Heart left ventricle (tissue), 16 donors: ENCODE measurements at regions of chr20 and their contacts with region 1.

Region 1: DNA sequence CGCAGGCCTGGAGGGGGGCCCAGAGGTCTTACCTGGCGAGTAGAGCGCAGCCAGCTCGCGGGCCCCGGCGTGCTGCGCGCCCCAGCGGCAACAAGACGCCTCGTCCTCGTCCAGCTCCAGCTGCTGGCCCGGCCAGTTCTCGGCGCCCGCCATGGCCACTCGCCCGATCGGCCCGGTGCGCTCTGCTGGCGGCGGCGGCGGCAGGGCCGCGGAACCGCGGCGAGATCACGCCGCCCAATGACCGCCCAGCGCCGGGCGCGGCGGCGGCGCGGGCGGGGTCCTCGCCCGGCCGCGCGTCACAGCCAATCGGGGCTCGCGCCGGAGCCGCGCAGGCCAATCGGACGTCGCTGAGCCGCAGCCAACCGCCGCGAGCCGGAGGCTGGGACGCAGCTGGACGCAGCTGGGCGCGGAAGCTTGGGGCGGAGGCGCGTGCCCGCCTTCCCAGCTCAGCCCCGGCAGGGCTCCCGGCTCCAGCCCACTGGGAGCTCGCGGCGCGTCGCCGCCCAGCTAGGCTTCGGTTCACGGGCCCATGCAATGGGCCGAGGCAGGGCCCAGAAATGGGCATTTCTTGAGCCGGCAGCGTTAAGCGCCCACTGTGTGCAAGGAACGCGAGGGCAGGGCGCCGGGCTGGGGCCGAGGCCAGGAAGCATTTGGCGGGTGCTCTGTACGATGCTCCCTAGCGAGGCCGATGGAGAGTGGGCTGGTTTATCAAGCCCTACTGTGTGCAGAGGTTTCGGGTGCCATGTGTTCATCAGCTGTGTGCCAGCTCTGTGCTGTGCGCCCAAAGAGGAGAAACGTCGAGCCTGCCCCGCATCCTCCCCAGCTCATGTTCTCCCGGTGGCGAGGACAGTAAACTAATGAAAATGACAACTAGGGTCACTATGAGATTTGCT is at the start of gene PEDS1:
- DNase-seq: peak; percentile 94 to 97 (median 95)
- ATAC-seq: peak; percentile 95 to 98 (median 97)
- H3K4me3 ChIP-seq: peak within 1 kb of the TSS; percentile 37 to 100 (median 97)
- H3K27ac ChIP-seq: peak within 1 kb of the TSS; percentile 54 to 98 (median 94)
- H3K4me1 ChIP-seq: peaks cover 7 to 50% (median 39%) of the 10 kb centered on the region in 12 donors
- H3K27me3 ChIP-seq: no peaks in the 10 kb centered on the region
- CTCF ChIP-seq: peak in 1 of 12 donors; percentile 15
- POLR2A ChIP-seq: peak; percentile 74 to 87
- total RNA-seq, gene PEDS1: 13.7 to 37.4 (median 23.6) TPM

Region 2: DNA sequence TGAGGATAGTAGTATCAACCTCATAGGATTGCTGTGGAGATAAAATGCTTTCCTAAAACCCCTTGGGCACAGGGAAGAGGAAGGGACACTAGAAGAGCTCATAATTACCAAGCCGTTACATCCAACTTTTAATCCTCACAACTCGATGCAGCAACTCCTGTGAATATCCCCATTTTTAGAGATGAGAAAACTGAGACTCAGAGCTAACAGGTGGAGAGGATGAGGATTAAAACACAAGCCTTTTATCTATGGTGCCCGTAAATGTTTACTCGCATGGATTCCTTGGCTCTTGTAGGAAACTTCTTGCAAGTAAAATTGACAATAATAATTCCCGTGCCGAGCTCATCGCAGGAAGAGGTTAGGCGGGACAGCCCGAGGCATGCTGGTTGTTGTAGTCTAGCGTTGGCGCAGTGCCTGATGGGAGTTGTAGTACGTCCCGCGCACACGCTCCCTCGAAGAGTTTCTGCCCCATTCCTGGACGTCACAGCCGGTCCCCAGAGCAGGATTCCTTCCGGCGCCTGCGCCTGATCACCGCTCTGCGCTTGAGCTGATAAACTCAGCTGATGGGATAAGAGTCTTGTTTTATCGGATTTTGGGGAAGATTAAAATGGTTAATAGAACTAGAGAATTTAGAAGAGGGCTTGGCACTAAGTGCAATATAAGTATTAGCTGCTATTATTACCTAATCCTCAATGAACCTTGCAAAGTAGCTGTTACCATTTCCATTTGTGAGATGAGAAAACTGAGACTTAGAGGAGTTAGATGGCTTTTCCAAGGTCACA is 37.9 kb before region 1 on chr20:
- intact Hi-C with region 1: loop called in 1 of 10 experiments (anchors 5 kb)
- DNase-seq: peak; percentile 97 to 99 (median 98)
- ATAC-seq: peak; percentile 87 to 94 (median 89)
- H3K4me3 ChIP-seq: peak overlapping the region; percentile 30 to 67 (median 56)
- H3K27ac ChIP-seq: peak overlapping the region; percentile 18 to 86 (median 78)
- H3K4me1 ChIP-seq: peaks cover 11 to 50% (median 34%) of the 10 kb centered on the region in 12 donors
- H3K27me3 ChIP-seq: no peaks in the 10 kb centered on the region
- CTCF ChIP-seq: no peak
- POLR2A ChIP-seq: peak in 1 of 2 donors; percentile 61

Region 3: GRCh38 chr20:50136822-50137599 is 16.7 kb before region 1 on chr20:
- intact Hi-C with region 1: loop called in 1 of 10 experiments (anchors 2 kb)
- DNase-seq: no peak
- ATAC-seq: no peak
- H3K4me3 ChIP-seq: no peak overlapping the region
- H3K27ac ChIP-seq: peak overlapping the region in 11 of 12 donors; percentile 11 to 71 (median 60)
- H3K4me1 ChIP-seq: peaks cover 0 to 63% (median 39%) of the 10 kb centered on the region in 12 donors
- H3K27me3 ChIP-seq: no peaks in the 10 kb centered on the region
- CTCF ChIP-seq: no peak
- POLR2A ChIP-seq: no peak

Region 4: DNA sequence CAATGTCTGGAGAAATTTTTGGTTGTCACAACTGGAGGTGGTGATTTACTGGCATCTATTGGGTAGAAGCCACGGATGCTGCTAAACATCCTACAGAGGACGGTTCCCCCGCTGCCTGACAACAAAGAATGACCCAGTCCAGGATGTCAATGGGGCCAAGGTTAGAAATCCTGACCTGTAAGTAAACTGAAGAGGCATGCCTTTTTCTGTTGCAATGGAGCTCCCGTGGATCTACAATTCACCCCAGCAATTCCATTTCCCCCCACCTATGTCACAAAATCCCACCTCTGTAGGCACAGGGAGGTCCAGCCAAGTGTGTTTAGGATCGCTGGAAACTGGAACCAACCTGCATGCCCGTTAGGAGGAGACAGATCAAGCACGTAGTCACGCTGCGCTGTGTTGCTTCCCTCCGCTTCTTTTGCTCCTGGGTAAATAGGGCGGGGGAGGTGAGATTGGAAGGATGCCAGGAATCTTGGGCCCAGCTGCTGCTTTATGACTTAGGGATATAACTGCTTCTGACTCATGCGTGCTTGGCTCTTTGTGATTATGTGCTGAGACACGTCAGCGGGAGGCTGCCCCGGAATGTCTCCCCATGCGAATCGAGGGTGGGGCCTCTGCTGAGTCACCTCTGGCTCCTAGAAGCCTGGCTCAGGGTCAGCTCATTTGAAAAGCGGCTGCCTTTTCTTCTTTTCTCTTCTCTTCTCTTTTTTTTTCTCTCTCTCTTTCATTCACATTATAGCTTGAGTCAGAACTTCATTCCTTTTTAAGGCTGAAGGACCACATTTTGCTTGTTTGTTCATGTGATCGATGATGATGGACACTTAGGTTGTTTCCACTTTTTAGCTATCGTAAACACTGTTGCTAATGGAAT is 12.2 kb after region 1 on chr20:
- intact Hi-C with region 1: loop called in 1 of 10 experiments (anchors 1 kb)
- DNase-seq: peak; percentile 95 to 99 (median 97)
- ATAC-seq: peak; percentile 97 to 99 (median 98)
- H3K4me3 ChIP-seq: peak overlapping the region in 11 of 12 donors; percentile 0 to 45 (median 34)
- H3K27ac ChIP-seq: peak overlapping the region; percentile 74 to 92 (median 89)
- H3K4me1 ChIP-seq: peaks cover 0 to 39% (median 17%) of the 10 kb centered on the region in 12 donors
- H3K27me3 ChIP-seq: no peaks in the 10 kb centered on the region
- CTCF ChIP-seq: peak in 1 of 12 donors; percentile 18
- POLR2A ChIP-seq: peak in 1 of 2 donors; percentile 50